ENCODE measurements at regions of chr12 and their contacts with region 1.

Region 1: GRCh38 chr12:122107261-122107660 is 28.7 kb downstream of the MLXIP start:
- DNase-seq: no peak
- H3K4me3 Mint-ChIP-seq: no peak overlapping the region
- H3K27ac Mint-ChIP-seq: no peak overlapping the region
- H3K4me1 Mint-ChIP-seq: peaks cover 64% of the 10 kb centered on the region
- H3K27me3 Mint-ChIP-seq: no peaks in the 10 kb centered on the region

Region 2: DNA sequence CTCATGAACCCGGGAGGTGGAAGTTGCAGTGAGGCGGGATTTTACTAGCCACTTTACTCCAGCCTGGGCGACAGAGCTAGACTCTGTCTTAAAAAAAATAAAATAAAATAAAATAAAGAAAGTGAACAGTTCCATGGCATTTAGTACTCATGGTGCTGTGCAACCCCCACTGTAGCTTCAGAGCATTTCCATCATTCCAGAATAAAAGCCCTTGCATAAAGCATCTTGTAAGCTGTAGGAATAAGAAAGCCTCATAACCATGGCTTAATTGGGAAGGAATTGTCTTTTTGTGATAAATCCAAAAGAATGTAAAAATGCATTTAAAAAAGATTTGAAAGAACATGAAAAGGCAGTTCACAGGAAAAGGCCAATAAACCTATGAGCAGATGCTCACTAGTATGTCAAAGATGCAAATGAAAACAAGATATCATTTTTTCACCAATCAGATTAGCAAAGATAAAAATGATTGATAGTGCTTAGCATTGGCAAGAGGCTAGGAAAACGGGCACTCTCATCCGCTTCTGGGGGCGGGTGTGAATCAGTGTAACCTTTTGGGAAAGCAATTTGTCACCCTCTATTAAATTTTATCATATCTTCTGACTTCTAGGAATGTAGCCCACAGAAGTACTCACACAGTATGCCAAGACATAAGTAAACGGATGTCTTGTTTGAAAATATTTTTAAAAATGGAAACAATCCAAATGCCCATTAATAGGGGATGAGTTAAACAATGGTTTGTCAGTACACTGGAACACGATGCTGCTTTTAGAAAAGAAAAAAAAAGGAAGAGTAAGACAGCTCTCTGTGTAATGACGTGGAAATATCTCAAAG is 142.2 kb before region 1 on chr12:
- CTCF ChIA-PET with region 1: no interaction called
- POLR2A ChIA-PET with region 1: no interaction called
- intact Hi-C with region 1: no loop called
- DNase-seq: no peak
- H3K4me3 Mint-ChIP-seq: no peak overlapping the region
- H3K27ac Mint-ChIP-seq: no peak overlapping the region
- H3K4me1 Mint-ChIP-seq: no peaks in the 10 kb centered on the region
- H3K27me3 Mint-ChIP-seq: no peaks in the 10 kb centered on the region

Region 3: GRCh38 chr12:122078141-122079032 is 28.9 kb before region 1 on chr12 and contains the start of gene MLXIP:
- CTCF ChIA-PET with region 1: interaction called, 4 read pairs
- POLR2A ChIA-PET with region 1: interaction called, 8 read pairs
- intact Hi-C with region 1: loop called (anchors 1 kb)
- DNase-seq: peak; percentile 93
- H3K4me3 Mint-ChIP-seq: peak within 1 kb of the TSS; percentile 83
- H3K27ac Mint-ChIP-seq: peak within 1 kb of the TSS; percentile 8
- H3K4me1 Mint-ChIP-seq: peaks cover 45% of the 10 kb centered on the region
- H3K27me3 Mint-ChIP-seq: no peaks in the 10 kb centered on the region
- total RNA-seq, gene MLXIP: 17.5 to 19.6 TPM

Region 4: DNA sequence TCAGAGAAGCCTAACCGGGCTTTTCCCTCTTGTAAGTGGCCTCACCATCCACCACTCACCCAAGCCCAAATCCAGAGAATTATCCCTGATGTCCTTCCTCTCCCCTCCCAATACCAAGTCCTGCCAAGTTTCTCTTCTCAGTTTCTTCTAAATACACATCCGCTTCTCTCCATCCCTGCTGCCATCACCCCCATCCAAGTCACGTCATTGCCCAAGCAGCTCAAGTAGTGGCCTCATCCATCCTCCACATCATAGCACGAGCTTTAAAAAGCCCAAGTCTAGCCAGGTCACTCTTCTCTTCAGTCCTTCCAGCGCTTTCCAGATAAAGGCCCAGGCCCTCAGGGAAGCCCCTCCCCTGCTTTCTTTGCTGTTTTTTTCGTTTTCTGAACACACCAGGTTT is 41.4 kb after region 1 on chr12:
- CTCF ChIA-PET with region 1: no interaction called
- POLR2A ChIA-PET with region 1: no interaction called
- intact Hi-C with region 1: loop called (anchors 1 kb)
- DNase-seq: no peak
- H3K4me3 Mint-ChIP-seq: no peak overlapping the region
- H3K27ac Mint-ChIP-seq: no peak overlapping the region
- H3K4me1 Mint-ChIP-seq: peaks cover 9% of the 10 kb centered on the region
- H3K27me3 Mint-ChIP-seq: peaks cover 3% of the 10 kb centered on the region